Naive thymus-derived CD4-positive, alpha-beta T cell (primary cell): ENCODE measurements at regions of chr2 and their contacts with region 1.

Region 1: GRCh38 chr2:198004921-198005829 is 200.8 kb downstream of the PLCL1 start:
- DNase-seq: peak in 5 of 9 donors; percentile 8 to 49 (median 28)
- ATAC-seq: peak; percentile 80
- H3K4me3 ChIP-seq: no peak overlapping the region
- H3K4me3 Mint-ChIP-seq: peak overlapping the region in 8 of 10 donors; percentile 29 to 75 (median 63)
- H3K27ac ChIP-seq: no peak overlapping the region
- H3K27ac Mint-ChIP-seq: peak overlapping the region; percentile 37 to 88 (median 69)
- H3K4me1 ChIP-seq: no peaks in the 10 kb centered on the region
- H3K4me1 Mint-ChIP-seq: peaks cover 12 to 77% (median 60%) of the 10 kb centered on the region in 7 donors
- H3K27me3 ChIP-seq: no peaks in the 10 kb centered on the region
- H3K27me3 Mint-ChIP-seq: no peaks in the 10 kb centered on the region

Region 2: DNA sequence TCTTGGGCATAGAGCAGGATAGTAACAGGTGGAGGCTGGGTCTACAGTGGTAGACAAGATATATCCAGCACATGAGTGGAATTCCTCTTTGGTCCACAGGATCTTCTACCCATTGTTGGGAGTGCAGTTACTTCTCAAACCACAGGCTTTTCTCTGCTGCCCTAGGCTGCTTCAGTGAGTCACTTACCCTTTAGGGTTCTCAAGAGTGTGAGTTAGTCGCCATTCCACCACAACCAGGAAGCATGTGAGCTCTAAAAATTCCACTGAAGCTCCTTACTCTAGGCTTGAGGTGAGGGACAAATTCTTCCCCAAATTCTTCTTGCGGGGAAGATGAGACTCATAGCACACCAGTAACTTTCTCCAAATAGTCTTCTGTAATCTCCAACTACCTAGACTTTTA is 11.3 kb before region 1 on chr2:
- CTCF ChIA-PET with region 1: no interaction called
- POLR2A ChIA-PET with region 1: no interaction called
- intact Hi-C with region 1: loop called in 1 of 2 experiments (anchors 2 kb)
- DNase-seq: no peak
- ATAC-seq: no peak
- H3K4me3 ChIP-seq: no peak overlapping the region
- H3K4me3 Mint-ChIP-seq: peak overlapping the region in 1 of 10 donors; percentile 1
- H3K27ac ChIP-seq: no peak overlapping the region
- H3K27ac Mint-ChIP-seq: peak overlapping the region in 2 of 9 donors; percentile 7 to 29
- H3K4me1 ChIP-seq: peaks cover 0 to 27% of the 10 kb centered on the region in 2 donors
- H3K4me1 Mint-ChIP-seq: peaks cover 13 to 84% (median 75%) of the 10 kb centered on the region in 7 donors
- H3K27me3 ChIP-seq: no peaks in the 10 kb centered on the region
- H3K27me3 Mint-ChIP-seq: no peaks in the 10 kb centered on the region

Region 3: DNA sequence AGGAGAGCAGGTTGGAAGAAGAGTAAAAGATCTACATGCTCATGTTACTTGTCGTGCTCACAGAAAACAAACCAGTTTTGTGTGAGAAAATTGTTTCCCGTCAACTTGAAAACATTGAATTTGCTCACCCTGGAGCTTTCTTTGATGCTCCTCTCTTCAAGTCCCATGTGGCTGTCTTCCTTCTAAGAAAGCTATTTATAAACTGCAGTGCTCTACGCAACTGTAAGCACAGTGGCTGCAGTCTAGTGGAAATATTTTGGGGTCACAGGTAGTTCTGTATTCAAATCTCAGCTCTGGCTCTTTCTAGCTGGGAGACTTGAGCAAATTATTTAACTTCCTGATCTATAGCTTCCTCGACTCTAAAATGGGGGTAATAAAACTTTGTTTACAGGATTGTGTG is 11.1 kb after region 1 on chr2:
- CTCF ChIA-PET with region 1: no interaction called
- POLR2A ChIA-PET with region 1: interaction called, 5 read pairs
- intact Hi-C with region 1: loop called in 1 of 2 experiments (anchors 2 kb)
- DNase-seq: peak in 1 of 9 donors; percentile 16
- ATAC-seq: no peak
- H3K4me3 ChIP-seq: no peak overlapping the region
- H3K4me3 Mint-ChIP-seq: peak overlapping the region in 8 of 10 donors; percentile 18 to 78 (median 37)
- H3K27ac ChIP-seq: no peak overlapping the region
- H3K27ac Mint-ChIP-seq: peak overlapping the region in 8 of 9 donors; percentile 7 to 81 (median 32)
- H3K4me1 ChIP-seq: peaks cover 0 to 7% of the 10 kb centered on the region in 2 donors
- H3K4me1 Mint-ChIP-seq: peaks cover 11 to 58% (median 43%) of the 10 kb centered on the region in 7 donors
- H3K27me3 ChIP-seq: no peaks in the 10 kb centered on the region
- H3K27me3 Mint-ChIP-seq: no peaks in the 10 kb centered on the region

Region 4: DNA sequence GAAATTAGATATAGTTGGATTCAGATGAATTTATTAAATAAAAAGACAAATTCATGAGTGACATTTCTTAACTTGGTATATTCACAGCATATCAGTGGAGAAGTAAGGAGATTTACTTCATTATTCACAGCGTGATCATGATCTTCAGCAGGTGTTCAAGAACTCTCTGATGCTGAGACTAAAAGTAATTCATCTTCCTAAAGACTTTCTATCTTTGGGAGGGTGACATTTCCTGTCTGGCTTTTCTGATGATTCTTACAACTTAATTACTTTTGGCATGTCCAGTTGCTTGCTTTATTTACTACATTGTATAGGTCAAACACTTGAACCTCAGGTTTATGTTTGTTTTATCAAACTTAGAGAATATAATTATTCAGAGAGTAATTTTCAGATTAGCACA is 23.8 kb after region 1 on chr2:
- CTCF ChIA-PET with region 1: no interaction called
- POLR2A ChIA-PET with region 1: no interaction called
- intact Hi-C with region 1: loop called in 1 of 2 experiments (anchors 2 kb)
- DNase-seq: no peak
- ATAC-seq: no peak
- H3K4me3 ChIP-seq: no peak overlapping the region
- H3K4me3 Mint-ChIP-seq: peak overlapping the region in 3 of 10 donors; percentile 7 to 42 (median 9)
- H3K27ac ChIP-seq: no peak overlapping the region
- H3K27ac Mint-ChIP-seq: peak overlapping the region in 3 of 9 donors; percentile 3 to 50 (median 45)
- H3K4me1 ChIP-seq: peaks cover 0 to 22% of the 10 kb centered on the region in 2 donors
- H3K4me1 Mint-ChIP-seq: peaks cover 4 to 76% (median 55%) of the 10 kb centered on the region in 7 donors
- H3K27me3 ChIP-seq: no peaks in the 10 kb centered on the region
- H3K27me3 Mint-ChIP-seq: no peaks in the 10 kb centered on the region

Region 5: DNA sequence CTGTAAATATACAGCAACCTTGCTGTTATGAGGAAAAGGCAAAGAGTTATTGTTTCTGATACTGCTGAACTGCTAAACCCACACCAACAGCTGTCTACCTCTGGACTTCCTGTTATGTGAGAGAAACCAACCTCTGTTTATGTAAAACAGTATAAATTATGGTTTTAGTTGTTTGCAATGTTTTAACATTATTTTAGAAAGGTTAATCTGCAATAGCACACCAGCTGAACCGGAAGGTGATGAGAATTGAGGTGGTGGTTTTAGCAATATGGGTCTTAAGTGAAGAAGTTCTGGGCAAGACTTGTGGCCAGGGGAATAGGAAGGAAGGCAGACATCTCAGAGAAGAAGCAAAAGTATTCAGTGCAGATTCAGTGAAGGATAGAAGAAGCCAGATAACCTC is 37.0 kb after region 1 on chr2:
- CTCF ChIA-PET with region 1: interaction called, 4 read pairs
- POLR2A ChIA-PET with region 1: no interaction called
- intact Hi-C with region 1: loop called in 1 of 2 experiments (anchors 2 kb)
- DNase-seq: peak in 5 of 9 donors; percentile 2 to 41 (median 25)
- ATAC-seq: peak; percentile 70
- H3K4me3 ChIP-seq: no peak overlapping the region
- H3K4me3 Mint-ChIP-seq: no peak overlapping the region
- H3K27ac ChIP-seq: no peak overlapping the region
- H3K27ac Mint-ChIP-seq: no peak overlapping the region
- H3K4me1 ChIP-seq: peaks cover 0 to 26% of the 10 kb centered on the region in 2 donors
- H3K4me1 Mint-ChIP-seq: peaks cover 0 to 35% (median 20%) of the 10 kb centered on the region in 7 donors
- H3K27me3 ChIP-seq: no peaks in the 10 kb centered on the region
- H3K27me3 Mint-ChIP-seq: no peaks in the 10 kb centered on the region

Region 6: DNA sequence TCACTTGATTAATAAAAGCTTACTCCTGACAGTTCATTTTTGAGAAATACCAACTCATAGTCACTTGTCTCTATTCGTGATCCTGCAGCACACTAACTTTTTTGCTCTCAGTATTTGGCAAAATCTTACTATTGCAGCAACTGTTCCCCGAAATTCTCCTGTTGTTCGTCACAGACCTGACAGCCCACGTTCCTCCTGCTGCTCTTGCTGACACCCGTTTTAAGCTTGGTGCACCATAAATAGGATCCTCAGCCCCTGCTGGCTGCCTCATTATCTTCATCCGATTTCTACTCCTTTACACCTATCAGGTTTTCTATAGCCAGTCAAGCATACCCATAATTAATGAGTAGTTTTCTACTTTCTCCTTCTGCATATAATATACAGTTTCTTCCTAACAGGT is 168.1 kb after region 1 on chr2:
- CTCF ChIA-PET with region 1: no interaction called
- POLR2A ChIA-PET with region 1: no interaction called
- intact Hi-C with region 1: no loop called
- DNase-seq: no peak
- ATAC-seq: no peak
- H3K4me3 ChIP-seq: no peak overlapping the region
- H3K4me3 Mint-ChIP-seq: no peak overlapping the region
- H3K27ac ChIP-seq: no peak overlapping the region
- H3K27ac Mint-ChIP-seq: no peak overlapping the region
- H3K4me1 ChIP-seq: no peaks in the 10 kb centered on the region
- H3K4me1 Mint-ChIP-seq: no peaks in the 10 kb centered on the region
- H3K27me3 ChIP-seq: no peaks in the 10 kb centered on the region
- H3K27me3 Mint-ChIP-seq: peaks cover 0 to 6% (median 3%) of the 10 kb centered on the region in 5 donors